CD8-positive, alpha-beta memory T cell (primary cell): ENCODE measurements at regions of chr1 and their contacts with region 1.

Region 1: GRCh38 chr1:167533851-167534300 is 15.5 kb upstream of the CD247 start:
- DNase-seq: peak; percentile 43 to 73 (median 57)
- H3K4me3 ChIP-seq: no peak overlapping the region
- H3K4me3 Mint-ChIP-seq: no peak overlapping the region
- H3K27ac ChIP-seq: no peak overlapping the region
- H3K27ac Mint-ChIP-seq: no peak overlapping the region
- H3K4me1 ChIP-seq: no peaks in the 10 kb centered on the region
- H3K4me1 Mint-ChIP-seq: peaks cover under 1 to 4% (median 2%) of the 10 kb centered on the region in 3 donors
- H3K27me3 ChIP-seq: no peaks in the 10 kb centered on the region
- H3K27me3 Mint-ChIP-seq: no peaks in the 10 kb centered on the region

Region 2: DNA sequence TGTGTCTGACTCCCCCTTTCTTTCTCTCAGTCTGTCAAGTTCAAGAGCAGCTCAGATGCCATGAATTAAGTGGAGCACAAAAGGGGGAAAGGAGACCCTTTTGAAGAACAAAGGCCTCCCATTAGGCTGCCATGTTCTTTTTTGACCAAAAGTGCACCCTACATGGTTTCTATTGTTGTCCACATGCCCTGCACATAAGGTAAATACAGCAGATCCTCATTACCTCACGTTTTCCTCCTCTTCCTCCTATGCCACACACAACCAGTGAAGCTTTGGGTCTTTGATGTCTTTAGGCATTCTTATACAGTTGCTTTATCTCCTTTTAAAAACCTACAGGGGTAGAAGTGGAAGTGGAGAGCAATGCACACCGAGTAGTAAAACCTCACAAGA is 265.5 kb before region 1 on chr1:
- CTCF ChIA-PET with region 1: interaction called, 29 read pairs
- POLR2A ChIA-PET with region 1: no interaction called
- DNase-seq: no peak
- H3K4me3 ChIP-seq: no peak overlapping the region
- H3K4me3 Mint-ChIP-seq: no peak overlapping the region
- H3K27ac ChIP-seq: no peak overlapping the region
- H3K27ac Mint-ChIP-seq: peak overlapping the region in 1 of 8 donors; percentile 37
- H3K4me1 ChIP-seq: peaks cover 23% of the 10 kb centered on the region
- H3K4me1 Mint-ChIP-seq: peaks cover 14 to 34% (median 33%) of the 10 kb centered on the region in 3 donors
- H3K27me3 ChIP-seq: no peaks in the 10 kb centered on the region
- H3K27me3 Mint-ChIP-seq: no peaks in the 10 kb centered on the region

Region 3: GRCh38 chr1:167328816-167329483 is 204.9 kb before region 1 on chr1:
- CTCF ChIA-PET with region 1: no interaction called
- POLR2A ChIA-PET with region 1: no interaction called
- DNase-seq: no peak
- H3K4me3 ChIP-seq: no peak overlapping the region
- H3K4me3 Mint-ChIP-seq: no peak overlapping the region
- H3K27ac ChIP-seq: peak overlapping the region; percentile 3
- H3K27ac Mint-ChIP-seq: peak overlapping the region in 1 of 8 donors; percentile 17
- H3K4me1 ChIP-seq: no peaks in the 10 kb centered on the region
- H3K4me1 Mint-ChIP-seq: peaks cover 14 to 40% (median 27%) of the 10 kb centered on the region in 3 donors
- H3K27me3 ChIP-seq: no peaks in the 10 kb centered on the region
- H3K27me3 Mint-ChIP-seq: no peaks in the 10 kb centered on the region

Region 4: GRCh38 chr1:167401260-167401873 is 132.5 kb before region 1 on chr1:
- CTCF ChIA-PET with region 1: interaction called, 64 read pairs
- POLR2A ChIA-PET with region 1: no interaction called
- DNase-seq: peak; percentile 30 to 68 (median 41)
- H3K4me3 ChIP-seq: no peak overlapping the region
- H3K4me3 Mint-ChIP-seq: no peak overlapping the region
- H3K27ac ChIP-seq: no peak overlapping the region
- H3K27ac Mint-ChIP-seq: peak overlapping the region in 3 of 8 donors; percentile 9 to 32 (median 13)
- H3K4me1 ChIP-seq: no peaks in the 10 kb centered on the region
- H3K4me1 Mint-ChIP-seq: peaks cover 0 to 4% (median 3%) of the 10 kb centered on the region in 3 donors
- H3K27me3 ChIP-seq: no peaks in the 10 kb centered on the region
- H3K27me3 Mint-ChIP-seq: no peaks in the 10 kb centered on the region

Region 5: GRCh38 chr1:167439301-167439988 is 94.4 kb before region 1 on chr1:
- CTCF ChIA-PET with region 1: interaction called, 20 read pairs
- POLR2A ChIA-PET with region 1: no interaction called
- DNase-seq: peak in 1 of 5 donors; percentile 54
- H3K4me3 ChIP-seq: peak overlapping the region; percentile 19
- H3K4me3 Mint-ChIP-seq: peak overlapping the region in 6 of 7 donors; percentile 37 to 85 (median 82)
- H3K27ac ChIP-seq: no peak overlapping the region
- H3K27ac Mint-ChIP-seq: peak overlapping the region; percentile 86 to 98 (median 96)
- H3K4me1 ChIP-seq: peaks cover 82% of the 10 kb centered on the region
- H3K4me1 Mint-ChIP-seq: peaks cover 79 to 87% (median 85%) of the 10 kb centered on the region in 3 donors
- H3K27me3 ChIP-seq: no peaks in the 10 kb centered on the region
- H3K27me3 Mint-ChIP-seq: peaks cover 0 to 2% of the 10 kb centered on the region in 2 donors

Region 6: DNA sequence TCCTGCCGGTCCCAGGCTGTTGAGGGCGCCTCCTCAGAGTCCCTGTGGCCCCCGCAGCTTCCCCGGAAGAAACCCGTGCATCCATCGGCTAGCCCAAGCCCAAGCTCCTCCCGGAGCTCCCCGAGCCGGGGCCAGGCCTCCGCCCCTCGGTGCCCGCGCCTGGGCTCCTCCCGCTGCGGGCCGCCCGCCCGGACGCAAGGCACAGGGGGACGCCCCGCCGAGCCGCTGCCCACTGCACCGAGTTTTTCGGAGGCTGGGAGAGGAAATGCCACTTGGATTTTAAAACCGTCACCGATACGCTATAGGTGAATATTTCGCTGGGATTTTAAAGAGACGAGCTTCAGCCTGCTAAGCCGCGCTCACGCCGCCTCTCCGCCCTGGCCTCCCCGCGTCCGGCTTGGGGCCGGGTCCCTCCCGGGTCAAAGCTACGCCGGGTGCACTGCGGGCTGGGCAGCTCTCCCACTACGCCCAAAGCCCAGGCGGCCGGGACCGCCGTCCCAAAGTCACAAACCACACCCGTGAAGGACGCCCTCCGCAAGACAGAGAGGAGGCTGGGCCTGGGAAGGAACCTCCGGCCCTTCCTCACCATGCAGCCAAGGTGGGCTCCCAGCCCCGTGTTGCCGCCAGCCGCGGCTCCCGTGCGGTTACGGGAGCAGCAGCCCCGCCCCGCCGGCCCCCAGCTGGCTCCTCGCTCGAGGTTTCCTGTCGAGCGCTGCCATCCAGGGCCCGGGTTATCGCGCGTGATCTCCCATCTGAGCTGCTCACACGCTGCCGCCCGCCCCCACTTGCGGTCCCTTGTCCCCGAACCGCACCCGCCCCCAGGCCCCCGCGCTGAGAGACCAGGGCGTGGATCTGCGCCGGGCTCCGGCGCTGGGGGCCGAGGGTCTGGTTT is 78.7 kb before region 1 on chr1:
- CTCF ChIA-PET with region 1: interaction called, 15 read pairs
- POLR2A ChIA-PET with region 1: no interaction called
- DNase-seq: peak; percentile 78 to 89 (median 83)
- H3K4me3 ChIP-seq: peak overlapping the region; percentile 82
- H3K4me3 Mint-ChIP-seq: peak overlapping the region; percentile 72 to 91 (median 86)
- H3K27ac ChIP-seq: peak overlapping the region; percentile 66
- H3K27ac Mint-ChIP-seq: peak overlapping the region; percentile 48 to 94 (median 82)
- H3K4me1 ChIP-seq: peaks cover 73% of the 10 kb centered on the region
- H3K4me1 Mint-ChIP-seq: peaks cover 56 to 81% (median 69%) of the 10 kb centered on the region in 3 donors
- H3K27me3 ChIP-seq: no peaks in the 10 kb centered on the region
- H3K27me3 Mint-ChIP-seq: no peaks in the 10 kb centered on the region

Region 7: GRCh38 chr1:167491586-167492461 is 42.1 kb before region 1 on chr1:
- CTCF ChIA-PET with region 1: interaction called, 6 read pairs
- POLR2A ChIA-PET with region 1: interaction called, 11 read pairs
- DNase-seq: peak in 1 of 5 donors; percentile 37
- H3K4me3 ChIP-seq: peak overlapping the region; percentile 23
- H3K4me3 Mint-ChIP-seq: peak overlapping the region; percentile 60 to 89 (median 70)
- H3K27ac ChIP-seq: no peak overlapping the region
- H3K27ac Mint-ChIP-seq: peak overlapping the region; percentile 82 to 97 (median 94)
- H3K4me1 ChIP-seq: peaks cover 98% of the 10 kb centered on the region
- H3K4me1 Mint-ChIP-seq: peaks cover 91 to 100% (median 99%) of the 10 kb centered on the region in 3 donors
- H3K27me3 ChIP-seq: no peaks in the 10 kb centered on the region
- H3K27me3 Mint-ChIP-seq: no peaks in the 10 kb centered on the region

Region 8: DNA sequence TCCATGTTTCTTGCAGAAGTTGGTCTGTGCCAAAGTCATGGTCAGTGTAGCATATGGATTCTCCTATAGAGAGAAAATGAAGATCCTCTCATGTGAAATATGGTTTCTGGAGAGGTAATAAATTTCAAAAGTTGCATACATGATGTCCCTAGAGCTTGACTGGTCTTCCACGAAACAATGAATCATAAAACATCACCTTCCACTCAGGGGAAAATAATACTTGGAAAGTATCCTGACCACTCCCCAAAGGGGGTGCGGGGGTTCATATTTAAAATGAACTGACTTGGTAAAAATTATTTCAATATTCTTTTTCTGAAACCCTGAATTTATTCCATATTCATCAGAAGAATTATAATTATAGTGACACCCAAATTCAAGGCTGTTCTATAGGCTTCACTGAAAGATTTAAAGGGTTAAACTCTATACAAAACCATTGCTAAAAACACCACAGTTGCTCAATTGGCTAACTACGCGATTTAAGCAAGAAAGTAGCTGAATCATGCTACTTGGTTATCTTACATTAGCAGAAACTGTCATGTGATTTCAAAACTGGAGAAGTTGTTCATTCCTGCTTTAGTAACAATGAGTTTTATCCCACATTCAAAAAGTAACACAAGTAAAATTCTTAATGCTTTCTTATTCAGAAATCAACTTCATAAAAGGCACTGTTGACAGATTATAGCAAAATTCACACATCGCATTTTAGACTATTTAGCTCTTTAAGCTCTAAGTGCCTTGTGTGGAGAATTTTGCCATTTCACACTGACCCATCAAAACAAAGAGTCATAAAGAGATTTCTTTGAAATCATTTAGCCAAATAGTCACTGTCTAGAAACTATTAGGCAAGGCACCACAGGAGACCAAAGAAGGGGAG is 14.4 kb after region 1 on chr1:
- CTCF ChIA-PET with region 1: interaction called, 10 read pairs
- POLR2A ChIA-PET with region 1: interaction called, 4 read pairs
- DNase-seq: no peak
- H3K4me3 ChIP-seq: no peak overlapping the region
- H3K4me3 Mint-ChIP-seq: peak overlapping the region in 2 of 7 donors; percentile 57 to 82
- H3K27ac ChIP-seq: peak overlapping the region; percentile 71
- H3K27ac Mint-ChIP-seq: peak overlapping the region in 1 of 8 donors; percentile 75
- H3K4me1 ChIP-seq: peaks cover 19% of the 10 kb centered on the region
- H3K4me1 Mint-ChIP-seq: peaks cover 20 to 31% (median 30%) of the 10 kb centered on the region in 3 donors
- H3K27me3 ChIP-seq: no peaks in the 10 kb centered on the region
- H3K27me3 Mint-ChIP-seq: no peaks in the 10 kb centered on the region

Region 9: DNA sequence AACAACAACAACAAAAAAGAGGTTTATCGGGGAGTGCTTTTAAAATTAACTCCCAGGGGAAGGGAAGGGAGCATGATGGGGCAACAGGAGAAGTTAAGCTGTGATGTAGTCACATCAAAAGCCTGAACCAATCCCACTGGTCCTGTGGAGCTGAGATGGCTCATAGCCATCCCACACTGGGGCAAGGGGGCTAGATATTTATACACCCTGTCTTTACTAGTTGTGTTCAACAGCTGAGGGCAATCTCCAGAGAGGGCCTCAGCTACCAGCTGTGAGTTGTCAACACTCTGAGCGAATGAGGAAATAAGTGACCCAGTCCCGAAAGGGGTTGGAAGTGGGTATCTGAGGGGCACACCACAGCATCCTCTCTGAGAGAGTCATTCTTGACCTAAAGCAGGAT is 50.7 kb after region 1 on chr1:
- CTCF ChIA-PET with region 1: no interaction called
- POLR2A ChIA-PET with region 1: no interaction called
- DNase-seq: no peak
- H3K4me3 ChIP-seq: no peak overlapping the region
- H3K4me3 Mint-ChIP-seq: no peak overlapping the region
- H3K27ac ChIP-seq: no peak overlapping the region
- H3K27ac Mint-ChIP-seq: no peak overlapping the region
- H3K4me1 ChIP-seq: no peaks in the 10 kb centered on the region
- H3K4me1 Mint-ChIP-seq: no peaks in the 10 kb centered on the region
- H3K27me3 ChIP-seq: no peaks in the 10 kb centered on the region
- H3K27me3 Mint-ChIP-seq: no peaks in the 10 kb centered on the region